Uterus (tissue), 4 donors: ENCODE measurements at regions of chr7 and their contacts with region 1.

Region 1: DNA sequence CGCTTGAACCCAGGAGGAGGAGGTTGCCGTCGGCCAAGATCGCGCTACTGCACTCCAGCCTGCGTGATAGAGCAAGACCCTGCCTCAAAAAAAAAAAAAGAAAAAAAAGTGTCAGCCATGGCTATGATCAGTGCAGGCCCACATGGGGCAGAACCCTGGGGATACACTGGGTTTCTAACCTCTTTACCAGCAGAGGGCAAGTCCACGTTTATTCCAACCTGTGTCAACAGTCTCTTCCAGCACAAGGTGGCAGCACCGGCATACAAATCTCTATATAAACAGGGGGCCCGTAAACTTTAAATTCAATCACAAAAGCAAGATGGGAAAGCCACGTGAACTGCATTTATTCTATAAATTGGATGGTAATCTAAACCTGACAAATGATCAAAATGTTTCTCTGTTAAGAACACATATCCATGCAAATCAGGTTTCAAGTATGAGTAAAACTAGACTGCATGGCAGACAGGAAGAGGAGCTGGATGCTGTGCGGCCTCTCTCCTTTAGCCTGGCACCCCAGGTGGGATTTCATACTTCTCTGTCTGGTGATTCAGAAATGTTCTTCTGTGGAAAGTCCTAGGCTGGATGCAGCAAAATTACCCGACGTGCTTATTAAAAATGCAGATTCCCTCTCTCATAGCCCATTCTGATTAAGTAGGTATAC is 60.0 kb upstream of the STEAP1B start:
- DNase-seq: peak; percentile 71 to 75
- H3K4me3 ChIP-seq: no peak overlapping the region
- H3K27ac ChIP-seq: no peak overlapping the region
- H3K4me1 ChIP-seq: peaks cover 0 to 5% of the 10 kb centered on the region in 2 donors
- H3K27me3 ChIP-seq: no peaks in the 10 kb centered on the region
- CTCF ChIP-seq: peak; percentile 89 to 96 (median 92)
- POLR2A ChIP-seq: no peak

Region 2: GRCh38 chr7:22356701-22357353 is 203.1 kb before region 1 on chr7 and contains the start of gene RAPGEF5:
- intact Hi-C with region 1: no loop called
- DNase-seq: no peak
- H3K4me3 ChIP-seq: peak within 1 kb of the TSS; percentile 20 to 32
- H3K27ac ChIP-seq: no peak within 1 kb of the TSS
- H3K4me1 ChIP-seq: no peaks in the 10 kb centered on the region
- H3K27me3 ChIP-seq: no peaks in the 10 kb centered on the region
- CTCF ChIP-seq: no peak
- POLR2A ChIP-seq: no peak
- total RNA-seq, gene RAPGEF5: 44.7 to 124 (median 55.1) TPM

Region 3: DNA sequence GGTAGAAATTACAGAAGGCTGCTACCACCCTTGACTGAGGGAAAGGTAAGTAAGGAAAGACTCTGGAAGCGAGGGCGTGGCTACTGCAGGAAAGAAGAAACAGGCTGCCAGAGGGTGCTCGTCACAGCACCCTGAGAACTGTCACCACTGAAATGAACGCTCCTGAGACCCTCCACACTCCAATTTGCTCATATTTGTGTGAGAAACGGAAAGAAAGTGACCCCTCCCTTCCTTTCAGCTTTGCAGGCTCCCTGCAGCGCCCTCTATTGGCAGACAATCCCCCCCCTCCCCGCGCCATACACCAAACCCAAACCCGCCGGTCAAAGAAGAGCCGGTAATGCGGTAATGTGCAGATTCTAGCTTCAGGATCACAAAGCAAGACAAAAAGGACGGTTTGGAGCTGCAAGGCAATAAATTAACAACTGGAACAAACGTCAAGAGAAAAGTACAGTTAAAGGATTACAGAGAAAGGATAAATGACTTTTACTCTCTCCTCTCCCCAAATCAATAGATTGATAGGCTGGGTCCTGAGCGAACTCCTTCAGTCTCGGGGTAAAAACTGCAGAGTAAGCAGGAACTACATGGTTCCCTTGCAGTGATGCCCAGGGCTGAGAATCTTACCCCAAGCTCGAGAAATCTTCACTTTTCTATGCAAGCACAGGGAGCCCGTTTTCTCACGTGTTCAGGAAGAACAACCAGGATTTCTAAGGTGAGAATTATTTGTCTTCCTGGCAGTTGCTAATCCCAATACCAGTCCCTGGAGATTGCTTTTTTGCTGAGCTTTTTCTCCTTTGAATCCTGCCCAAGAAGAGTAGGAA is 107.6 kb before region 1 on chr7:
- intact Hi-C with region 1: no loop called
- DNase-seq: peak in 1 of 2 donors; percentile 34
- H3K4me3 ChIP-seq: no peak overlapping the region
- H3K27ac ChIP-seq: no peak overlapping the region
- H3K4me1 ChIP-seq: no peaks in the 10 kb centered on the region
- H3K27me3 ChIP-seq: no peaks in the 10 kb centered on the region
- CTCF ChIP-seq: peak; percentile 21 to 45 (median 26)
- POLR2A ChIP-seq: no peak

Region 4: GRCh38 chr7:22726345-22727185 is 166.6 kb after region 1 on chr7:
- intact Hi-C with region 1: loop called (anchors 10 kb)
- DNase-seq: peak; percentile 61 to 65
- H3K4me3 ChIP-seq: peak overlapping the region; percentile 18 to 32
- H3K27ac ChIP-seq: peak overlapping the region; percentile 66 to 77
- H3K4me1 ChIP-seq: peaks cover 0 to 6% of the 10 kb centered on the region in 2 donors
- H3K27me3 ChIP-seq: no peaks in the 10 kb centered on the region
- CTCF ChIP-seq: peak in 3 of 4 experiments; percentile 32 to 41 (median 37)
- POLR2A ChIP-seq: no peak

Region 5: DNA sequence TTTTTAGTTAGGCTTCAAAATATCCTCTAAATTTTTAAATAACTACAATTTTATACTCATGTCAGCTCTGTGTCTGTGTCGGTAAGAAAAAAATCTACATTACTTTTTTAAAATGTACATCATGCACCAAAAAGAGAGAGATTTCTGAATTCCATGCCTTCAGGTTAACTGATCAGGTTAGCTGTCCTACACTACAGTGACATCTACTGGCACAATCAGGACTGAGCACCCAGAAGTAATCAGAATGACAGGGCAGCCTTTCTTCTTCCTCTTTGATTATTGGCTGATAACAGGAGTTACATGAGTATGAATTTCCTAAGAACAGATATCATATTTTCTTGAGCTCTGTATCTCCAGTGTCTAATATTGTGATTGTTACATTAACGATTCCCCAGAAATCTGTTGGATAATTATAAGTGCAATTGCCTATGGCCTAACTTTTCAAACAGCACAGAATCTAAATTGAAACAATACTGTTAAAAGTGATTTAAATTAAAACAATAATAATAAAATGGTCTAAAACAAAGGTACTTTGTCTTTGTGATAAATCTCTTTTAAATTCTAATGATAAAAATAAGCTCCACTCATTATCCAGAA is 495.7 kb after region 1 on chr7:
- intact Hi-C with region 1: loop called (anchors 10 kb)
- DNase-seq: peak in 1 of 2 donors; percentile 43
- H3K4me3 ChIP-seq: no peak overlapping the region
- H3K27ac ChIP-seq: no peak overlapping the region
- H3K4me1 ChIP-seq: no peaks in the 10 kb centered on the region
- H3K27me3 ChIP-seq: no peaks in the 10 kb centered on the region
- CTCF ChIP-seq: peak; percentile 78 to 87 (median 87)
- POLR2A ChIP-seq: no peak